ENCODE measurements at regions of chr17 and their contacts with region 1.

Region 1: GRCh38 chr17:43878260-43879175 is 28.8 kb downstream of the MPP2 start:
- DNase-seq: peak; percentile 50 to 62 (median 54)
- H3K4me3 ChIP-seq: no peak overlapping the region
- H3K27ac ChIP-seq: no peak overlapping the region
- H3K4me1 ChIP-seq: no peaks in the 10 kb centered on the region
- H3K27me3 ChIP-seq: peaks cover 0 to 5% (median 0%) of the 10 kb centered on the region in 5 experiments

Region 2: DNA sequence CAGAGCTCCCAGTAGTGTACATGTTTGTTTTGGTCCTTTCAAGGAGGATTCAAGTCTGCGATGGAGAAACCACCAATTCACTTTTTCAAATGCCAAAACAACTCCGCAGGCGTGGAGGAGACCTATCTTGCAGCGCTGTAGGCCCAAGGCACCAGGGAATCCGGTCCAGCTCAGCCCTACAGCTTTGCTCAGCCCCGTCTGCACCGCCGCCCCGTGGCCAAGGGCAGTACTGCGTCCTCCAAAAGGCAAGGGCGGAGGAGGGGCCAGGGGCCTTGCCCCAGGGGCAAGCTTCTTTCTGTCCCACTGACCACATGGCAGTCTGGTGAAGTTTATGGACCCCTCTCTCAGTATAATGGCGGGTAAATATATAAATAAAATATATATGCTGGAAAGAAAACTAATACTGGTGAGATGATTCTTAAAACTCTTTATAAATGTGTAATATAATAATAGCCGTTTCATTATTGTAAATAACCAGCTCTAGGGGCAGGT is 32.3 kb before region 1 on chr17:
- CTCF ChIA-PET with region 1: interaction called, 14 read pairs
- POLR2A ChIA-PET with region 1: no interaction called
- DNase-seq: peak; percentile 68 to 74 (median 71)
- H3K4me3 ChIP-seq: no peak overlapping the region
- H3K27ac ChIP-seq: no peak overlapping the region
- H3K4me1 ChIP-seq: peaks cover 0 to 15% (median 8%) of the 10 kb centered on the region in 4 experiments
- H3K27me3 ChIP-seq: no peaks in the 10 kb centered on the region

Region 3: DNA sequence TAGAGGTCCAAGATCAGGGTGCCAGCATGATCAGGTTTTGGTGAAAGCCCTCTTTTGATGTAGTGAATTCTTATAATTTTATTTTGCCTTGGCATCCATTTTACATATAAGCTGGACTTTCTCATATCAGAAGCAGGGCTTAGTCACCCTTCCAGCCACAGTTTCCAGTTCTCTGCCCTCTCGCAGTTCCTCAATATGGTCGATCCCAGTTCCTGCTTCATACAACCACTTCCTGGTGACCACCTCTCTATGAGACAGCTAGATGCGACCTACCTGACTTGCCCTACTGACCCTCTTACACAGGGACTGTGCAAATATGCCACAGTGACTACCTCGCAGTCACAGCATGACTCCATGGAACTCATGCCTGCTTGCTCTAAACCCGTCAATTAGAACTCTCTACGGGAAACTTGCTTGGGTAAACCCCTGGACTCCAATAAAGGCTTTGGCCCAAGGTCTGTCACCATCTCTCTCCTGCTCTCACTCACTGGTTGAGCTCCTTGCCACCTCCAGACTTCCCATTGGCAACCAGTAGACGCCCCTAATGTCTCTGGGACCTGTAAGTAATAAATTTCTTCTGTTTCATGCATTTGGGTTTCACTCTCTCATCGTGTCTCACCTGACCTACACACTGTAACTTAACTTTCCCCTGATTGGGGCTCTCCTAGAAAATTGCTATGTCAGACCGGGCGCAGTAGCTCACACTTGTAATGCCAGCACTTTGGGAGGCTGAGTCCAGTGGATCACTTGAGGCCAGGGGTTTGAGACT is 10.1 kb before region 1 on chr17:
- CTCF ChIA-PET with region 1: interaction called, 29 read pairs
- POLR2A ChIA-PET with region 1: no interaction called
- DNase-seq: peak in 2 of 3 donors; percentile 11 to 17
- H3K4me3 ChIP-seq: no peak overlapping the region
- H3K27ac ChIP-seq: no peak overlapping the region
- H3K4me1 ChIP-seq: peaks cover 0 to 4% (median 2%) of the 10 kb centered on the region in 4 experiments
- H3K27me3 ChIP-seq: peaks cover 0 to 4% (median 2%) of the 10 kb centered on the region in 5 experiments

Region 4: DNA sequence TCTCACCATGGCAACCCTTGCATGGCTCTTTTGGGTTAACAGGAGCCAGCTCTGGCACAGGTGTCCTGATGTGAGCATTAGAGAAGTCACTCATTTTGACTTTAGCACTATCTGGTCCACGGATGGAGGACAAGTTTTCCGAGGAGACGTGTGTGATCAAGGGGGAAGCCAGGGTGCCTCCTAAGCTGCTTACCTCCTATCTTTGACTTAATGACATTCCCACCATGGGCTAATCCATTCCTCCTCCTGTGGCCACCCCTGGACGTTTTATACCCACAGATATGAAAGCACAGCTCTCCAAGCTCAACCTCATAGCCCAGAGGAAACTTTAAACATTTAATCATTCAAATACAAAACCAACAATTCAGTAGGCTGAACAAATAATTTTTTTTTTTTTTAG is 10.0 kb after region 1 on chr17:
- CTCF ChIA-PET with region 1: interaction called, 28 read pairs
- POLR2A ChIA-PET with region 1: no interaction called
- DNase-seq: no peak
- H3K4me3 ChIP-seq: no peak overlapping the region
- H3K27ac ChIP-seq: no peak overlapping the region
- H3K4me1 ChIP-seq: no peaks in the 10 kb centered on the region
- H3K27me3 ChIP-seq: peaks cover 0 to 4% (median 0%) of the 10 kb centered on the region in 5 experiments

Region 5: DNA sequence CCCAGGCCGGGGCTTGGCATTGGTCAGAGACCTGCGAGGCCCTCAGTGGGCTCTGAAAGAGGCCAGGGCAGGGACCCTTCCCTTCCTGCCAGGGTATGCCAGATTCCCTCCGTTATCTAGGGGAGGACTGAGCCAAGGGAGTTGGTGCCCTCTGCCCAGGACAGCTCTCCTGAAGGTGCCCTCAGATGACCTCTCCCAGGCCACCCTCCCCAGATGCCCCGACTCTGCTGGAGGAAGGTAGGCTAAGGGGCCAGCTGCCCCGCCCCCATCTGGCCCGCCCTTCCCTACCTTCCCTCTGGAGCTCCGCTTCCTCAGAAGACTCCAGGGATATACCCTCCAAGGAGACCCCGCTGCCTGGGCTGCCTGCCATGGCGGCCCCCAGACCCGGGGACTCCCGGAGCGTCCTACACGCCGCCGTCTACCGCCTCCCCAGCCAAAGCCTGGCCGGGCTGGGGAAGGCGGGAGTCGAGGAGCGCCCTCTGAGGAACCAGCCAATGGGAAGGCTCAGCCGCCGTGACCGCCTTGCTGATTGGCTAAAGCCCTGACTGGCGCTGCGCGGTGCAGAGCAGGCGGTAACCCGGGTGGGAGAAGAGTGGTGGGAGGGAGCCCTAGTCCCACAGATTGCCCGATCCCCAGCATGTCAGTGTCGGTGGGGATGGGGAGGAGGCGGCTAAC is 21.8 kb after region 1 on chr17:
- CTCF ChIA-PET with region 1: interaction called, 29 read pairs
- POLR2A ChIA-PET with region 1: no interaction called
- DNase-seq: peak; percentile 73 to 91 (median 87)
- H3K4me3 ChIP-seq: peak overlapping the region; percentile 23 to 72 (median 43)
- H3K27ac ChIP-seq: no peak overlapping the region
- H3K4me1 ChIP-seq: peaks cover 0 to 14% (median 13%) of the 10 kb centered on the region in 4 experiments
- H3K27me3 ChIP-seq: peaks cover 0 to 15% (median 8%) of the 10 kb centered on the region in 5 experiments

Region 6: DNA sequence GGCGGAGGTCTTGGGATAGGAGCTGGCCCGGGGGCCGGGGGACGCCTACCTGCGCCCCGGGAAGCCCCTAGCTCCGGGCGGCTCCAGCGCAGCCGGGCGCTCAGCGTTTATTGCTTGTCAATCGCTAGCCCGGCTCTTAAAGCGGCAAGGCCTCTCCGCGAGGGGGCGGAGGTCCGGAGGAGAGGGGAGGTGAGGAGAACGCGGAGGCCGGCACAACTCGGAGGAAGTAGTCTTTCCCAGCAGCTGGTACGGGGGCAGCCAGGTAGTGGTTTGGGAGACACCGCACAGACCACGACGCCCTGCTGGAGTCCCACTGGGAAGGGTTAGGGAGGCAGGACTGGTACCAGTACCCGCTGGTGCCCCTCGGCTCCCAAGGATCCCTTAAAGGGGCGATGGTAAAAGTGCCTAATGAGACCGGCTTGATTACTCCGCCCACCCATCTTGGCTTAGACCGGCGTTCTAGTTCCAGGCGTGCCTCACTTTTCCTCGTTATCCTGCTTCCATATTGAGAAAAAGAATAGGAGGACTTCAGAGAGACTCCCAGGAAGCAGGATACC is 29.0 kb after region 1 on chr17 and contains the start of gene MPP2:
- CTCF ChIA-PET with region 1: interaction called, 29 read pairs
- POLR2A ChIA-PET with region 1: no interaction called
- DNase-seq: peak; percentile 68 to 86 (median 77)
- H3K4me3 ChIP-seq: peak within 1 kb of the TSS; percentile 30 to 77 (median 58)
- H3K27ac ChIP-seq: no peak within 1 kb of the TSS
- H3K4me1 ChIP-seq: peaks cover 2 to 27% (median 22%) of the 10 kb centered on the region in 4 experiments
- H3K27me3 ChIP-seq: peaks cover 3 to 49% (median 31%) of the 10 kb centered on the region in 5 experiments

Region 7: GRCh38 chr17:43994272-43995149 is 116.0 kb after region 1 on chr17:
- CTCF ChIA-PET with region 1: interaction called, 43 read pairs
- POLR2A ChIA-PET with region 1: no interaction called
- DNase-seq: peak; percentile 69 to 76 (median 70)
- H3K4me3 ChIP-seq: peak overlapping the region in 3 of 7 experiments; percentile 50 to 72 (median 59)
- H3K27ac ChIP-seq: no peak overlapping the region
- H3K4me1 ChIP-seq: peaks cover 0 to 10% (median 6%) of the 10 kb centered on the region in 4 experiments
- H3K27me3 ChIP-seq: peaks cover 0 to 29% (median 13%) of the 10 kb centered on the region in 5 experiments

Region 8: DNA sequence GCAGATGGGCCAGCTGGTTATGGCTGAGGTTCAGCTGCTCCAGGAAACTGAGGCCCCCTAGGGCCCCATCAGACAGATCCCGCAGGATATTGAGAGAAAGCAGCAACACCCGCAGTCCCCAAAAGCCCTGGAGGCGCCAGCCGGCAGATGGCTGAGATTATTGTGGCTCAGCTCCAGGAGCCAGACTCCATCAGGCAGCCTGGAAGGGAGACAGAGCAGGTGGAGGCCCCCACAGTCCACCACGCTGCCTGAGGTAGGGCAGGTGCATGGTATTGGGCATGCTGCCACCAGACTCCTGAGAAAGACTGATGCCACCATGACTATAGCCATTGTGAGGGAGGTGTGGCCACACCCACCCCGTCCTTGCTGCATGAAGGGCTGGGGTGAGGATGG is 145.7 kb after region 1 on chr17:
- CTCF ChIA-PET with region 1: no interaction called
- POLR2A ChIA-PET with region 1: no interaction called
- DNase-seq: no peak
- H3K4me3 ChIP-seq: no peak overlapping the region
- H3K27ac ChIP-seq: no peak overlapping the region
- H3K4me1 ChIP-seq: no peaks in the 10 kb centered on the region
- H3K27me3 ChIP-seq: no peaks in the 10 kb centered on the region

Measured in common myeloid progenitor, CD34-positive (primary cell).